CD4-positive, alpha-beta T cell (primary cell): ENCODE measurements at regions of chr2 and their contacts with region 1.

Region 1: DNA sequence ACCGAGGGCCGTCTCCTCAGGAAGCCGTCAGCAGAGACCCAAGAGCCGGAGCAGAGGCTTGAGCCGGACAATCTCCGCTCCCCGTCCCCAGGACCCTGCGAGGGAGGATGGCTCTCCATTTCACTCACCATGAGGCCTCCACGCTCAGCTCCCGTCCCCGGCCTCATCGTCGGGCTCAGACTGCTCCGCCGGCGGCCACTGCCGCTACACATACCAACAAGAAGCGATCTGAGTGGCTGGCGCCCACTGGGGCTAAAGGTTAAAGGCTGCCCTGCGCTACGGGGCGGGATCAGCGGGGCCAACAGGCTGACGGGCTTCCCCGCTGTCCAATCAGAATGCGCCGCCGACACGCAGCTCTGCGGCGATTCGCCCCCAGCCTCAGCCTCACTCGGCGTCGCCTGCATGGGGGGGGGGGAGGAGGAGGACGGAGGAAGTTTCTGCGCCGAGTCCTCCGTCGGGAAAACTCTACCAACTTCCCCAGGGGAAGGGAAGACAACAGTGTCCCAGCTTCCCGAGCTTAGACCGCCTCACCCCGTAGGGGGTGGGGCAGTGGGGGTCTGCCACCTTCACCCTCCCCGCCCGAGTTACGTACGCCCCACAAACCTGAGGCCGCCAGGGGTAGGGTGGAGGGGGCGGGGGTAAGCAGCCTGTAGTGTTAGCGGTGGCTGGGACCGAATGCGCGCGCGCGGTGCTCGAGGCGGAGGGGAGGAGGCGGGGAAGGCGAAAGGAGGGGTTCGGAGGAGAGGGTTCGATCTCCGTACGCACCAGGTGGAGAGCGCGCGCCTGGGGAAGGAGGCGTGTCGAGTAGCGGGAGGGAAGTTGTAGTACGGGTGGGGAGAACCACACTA is at the start of gene PRPF40A:
- DNase-seq: peak; percentile 97 to 100 (median 99)
- ATAC-seq: peak; percentile 76
- H3K4me3 ChIP-seq: peak within 1 kb of the TSS; percentile 88
- H3K4me3 Mint-ChIP-seq: peak within 1 kb of the TSS; percentile 99
- H3K27ac ChIP-seq: peak within 1 kb of the TSS; percentile 95 to 97
- H3K27ac Mint-ChIP-seq: peak within 1 kb of the TSS; percentile 97
- H3K4me1 ChIP-seq: peaks cover 8% of the 10 kb centered on the region
- H3K4me1 Mint-ChIP-seq: peaks cover 77% of the 10 kb centered on the region
- H3K27me3 ChIP-seq: no peaks in the 10 kb centered on the region
- H3K27me3 Mint-ChIP-seq: no peaks in the 10 kb centered on the region
- CTCF ChIP-seq: no peak
- total RNA-seq, gene PRPF40A: 146 to 148 TPM

Region 2: DNA sequence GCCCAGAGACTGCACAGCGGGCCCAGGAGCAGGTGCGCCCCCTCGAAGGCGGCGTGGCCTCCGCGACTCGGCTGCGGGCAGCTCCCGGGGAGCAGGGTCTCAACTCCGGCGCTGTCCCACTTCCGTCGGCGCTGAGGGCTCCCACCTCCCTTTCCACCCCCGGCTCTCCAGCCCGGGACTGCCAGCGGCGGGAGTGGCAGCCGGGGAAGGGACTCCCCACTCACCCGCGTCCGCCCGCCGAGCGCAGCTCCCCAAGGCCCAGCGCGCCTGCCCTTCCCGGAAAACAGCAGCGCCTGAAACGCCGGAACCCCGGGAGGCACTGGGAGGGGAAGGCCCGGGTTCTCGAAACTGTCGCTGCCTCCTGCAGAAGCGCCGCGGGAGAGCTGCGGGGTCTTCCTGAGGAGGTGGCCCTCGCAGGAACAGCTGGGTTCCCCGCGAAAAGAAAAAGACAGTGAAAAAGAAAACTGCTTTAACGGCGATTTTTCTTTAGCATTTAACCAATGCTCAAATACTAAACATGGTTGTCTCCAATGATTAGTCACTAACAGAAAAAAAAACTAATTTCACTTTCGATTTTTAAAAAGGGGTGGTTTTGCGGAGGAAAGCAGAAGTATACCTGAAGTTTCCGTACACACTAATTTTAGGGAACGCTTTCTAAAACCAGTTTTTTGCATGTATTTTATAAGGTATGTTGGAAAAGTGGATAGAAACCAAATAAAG is 1427.9 kb before region 1 on chr2 and contains the start of gene NMI:
- CTCF ChIA-PET with region 1: no interaction called
- POLR2A ChIA-PET with region 1: interaction called, 4 read pairs
- intact Hi-C with region 1: loop called in 1 of 2 experiments (anchors 10 kb)
- DNase-seq: peak; percentile 42 to 89 (median 61)
- ATAC-seq: peak; percentile 71
- H3K4me3 ChIP-seq: peak within 1 kb of the TSS; percentile 82
- H3K4me3 Mint-ChIP-seq: peak within 1 kb of the TSS; percentile 94
- H3K27ac ChIP-seq: peak within 1 kb of the TSS; percentile 82 to 97
- H3K27ac Mint-ChIP-seq: peak within 1 kb of the TSS; percentile 96
- H3K4me1 ChIP-seq: peaks cover 23% of the 10 kb centered on the region
- H3K4me1 Mint-ChIP-seq: peaks cover 56% of the 10 kb centered on the region
- H3K27me3 ChIP-seq: no peaks in the 10 kb centered on the region
- H3K27me3 Mint-ChIP-seq: no peaks in the 10 kb centered on the region
- CTCF ChIP-seq: no peak
- total RNA-seq, gene NMI: 23.5 to 24.2 TPM

Region 3: GRCh38 chr2:151828143-151828889 is 889.1 kb before region 1 on chr2 and contains the start of gene ARL5A:
- CTCF ChIA-PET with region 1: no interaction called
- POLR2A ChIA-PET with region 1: interaction called, 3 read pairs
- intact Hi-C with region 1: loop called in 1 of 2 experiments (anchors 5 kb)
- DNase-seq: peak; percentile 89 to 98 (median 95)
- ATAC-seq: peak; percentile 94
- H3K4me3 ChIP-seq: peak within 1 kb of the TSS; percentile 91
- H3K4me3 Mint-ChIP-seq: peak within 1 kb of the TSS; percentile 93
- H3K27ac ChIP-seq: peak within 1 kb of the TSS; percentile 51 to 52
- H3K27ac Mint-ChIP-seq: peak within 1 kb of the TSS; percentile 95
- H3K4me1 ChIP-seq: peaks cover 18% of the 10 kb centered on the region
- H3K4me1 Mint-ChIP-seq: peaks cover 50% of the 10 kb centered on the region
- H3K27me3 ChIP-seq: no peaks in the 10 kb centered on the region
- H3K27me3 Mint-ChIP-seq: no peaks in the 10 kb centered on the region
- CTCF ChIP-seq: no peak
- total RNA-seq, gene ARL5A: 16.9 to 20.5 TPM

Region 4: DNA sequence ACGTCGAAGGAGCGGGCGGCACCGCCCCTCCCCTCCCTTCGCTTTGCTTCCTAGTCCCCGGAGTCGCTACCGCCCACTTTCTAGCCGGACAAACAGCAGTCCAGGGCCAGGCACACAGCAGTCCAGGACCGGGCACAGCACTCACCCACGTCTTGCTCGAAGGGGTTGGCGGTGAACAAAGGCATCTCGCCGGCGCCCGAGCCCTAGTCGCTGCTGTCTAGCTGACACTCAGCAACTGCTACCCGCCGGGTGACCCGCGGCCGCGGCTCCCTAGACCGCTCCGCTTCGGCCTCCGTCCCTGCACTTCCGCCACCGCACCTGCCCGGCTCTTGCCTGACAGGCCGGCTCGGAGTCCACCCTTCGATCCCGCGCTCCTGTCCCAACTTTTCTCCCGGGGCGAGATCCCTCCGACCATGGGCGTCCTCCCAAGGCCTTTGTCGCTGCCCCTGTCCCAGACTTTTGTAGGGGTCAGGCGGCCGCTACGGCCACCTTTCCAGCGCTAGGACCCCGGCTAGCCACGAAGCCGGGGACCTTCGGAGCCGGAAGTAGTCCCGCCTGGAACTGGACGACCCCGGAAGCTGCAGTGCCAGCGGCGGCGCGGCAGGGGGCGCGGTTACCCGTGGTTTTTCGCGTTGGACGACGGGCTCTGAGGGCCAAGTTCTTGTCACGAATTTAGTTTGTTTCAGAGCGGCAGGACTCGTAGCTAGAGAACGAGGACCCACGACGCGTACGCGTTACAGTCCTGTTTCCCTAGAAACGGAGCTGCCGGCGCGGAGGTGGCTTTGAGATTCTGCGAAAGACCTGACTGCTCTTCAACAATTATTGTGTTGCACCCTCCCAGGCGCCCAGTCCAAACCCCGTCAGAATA is 541.8 kb before region 1 on chr2 and contains the start of gene STAM2:
- CTCF ChIA-PET with region 1: interaction called, 8 read pairs
- POLR2A ChIA-PET with region 1: interaction called, 25 read pairs
- intact Hi-C with region 1: loop called (anchors 1 to 2 kb)
- DNase-seq: peak; percentile 81 to 96 (median 92)
- ATAC-seq: peak; percentile 85
- H3K4me3 ChIP-seq: peak within 1 kb of the TSS; percentile 98
- H3K4me3 Mint-ChIP-seq: peak within 1 kb of the TSS; percentile 98
- H3K27ac ChIP-seq: peak within 1 kb of the TSS; percentile 94 to 97
- H3K27ac Mint-ChIP-seq: peak within 1 kb of the TSS; percentile 98
- H3K4me1 ChIP-seq: peaks cover 18% of the 10 kb centered on the region
- H3K4me1 Mint-ChIP-seq: peaks cover 48% of the 10 kb centered on the region
- H3K27me3 ChIP-seq: no peaks in the 10 kb centered on the region
- H3K27me3 Mint-ChIP-seq: no peaks in the 10 kb centered on the region
- CTCF ChIP-seq: peak; percentile 96
- total RNA-seq, gene STAM2: 4.1 to 4.9 TPM

Region 5: GRCh38 chr2:152664703-152665102 is 52.7 kb before region 1 on chr2:
- CTCF ChIA-PET with region 1: no interaction called
- POLR2A ChIA-PET with region 1: interaction called, 4 read pairs
- intact Hi-C with region 1: loop called in 1 of 2 experiments (anchors 5 kb)
- DNase-seq: no peak
- ATAC-seq: no peak
- H3K4me3 ChIP-seq: no peak overlapping the region
- H3K4me3 Mint-ChIP-seq: no peak overlapping the region
- H3K27ac ChIP-seq: no peak overlapping the region
- H3K27ac Mint-ChIP-seq: no peak overlapping the region
- H3K4me1 ChIP-seq: no peaks in the 10 kb centered on the region
- H3K4me1 Mint-ChIP-seq: no peaks in the 10 kb centered on the region
- H3K27me3 ChIP-seq: no peaks in the 10 kb centered on the region
- H3K27me3 Mint-ChIP-seq: no peaks in the 10 kb centered on the region
- CTCF ChIP-seq: no peak

Region 6: GRCh38 chr2:152694161-152694661 is 23.2 kb before region 1 on chr2:
- CTCF ChIA-PET with region 1: interaction called, 4 read pairs
- POLR2A ChIA-PET with region 1: interaction called, 14 read pairs
- intact Hi-C with region 1: loop called in 1 of 2 experiments (anchors 2 kb)
- DNase-seq: peak in 5 of 14 experiments; percentile 2 to 60 (median 44)
- ATAC-seq: peak; percentile 72
- H3K4me3 ChIP-seq: peak overlapping the region; percentile 38
- H3K4me3 Mint-ChIP-seq: peak overlapping the region; percentile 67
- H3K27ac ChIP-seq: peak overlapping the region in 1 of 2 donors; percentile 21
- H3K27ac Mint-ChIP-seq: peak overlapping the region; percentile 63
- H3K4me1 ChIP-seq: peaks cover 4% of the 10 kb centered on the region
- H3K4me1 Mint-ChIP-seq: peaks cover 60% of the 10 kb centered on the region
- H3K27me3 ChIP-seq: no peaks in the 10 kb centered on the region
- H3K27me3 Mint-ChIP-seq: no peaks in the 10 kb centered on the region
- CTCF ChIP-seq: no peak

Region 7: DNA sequence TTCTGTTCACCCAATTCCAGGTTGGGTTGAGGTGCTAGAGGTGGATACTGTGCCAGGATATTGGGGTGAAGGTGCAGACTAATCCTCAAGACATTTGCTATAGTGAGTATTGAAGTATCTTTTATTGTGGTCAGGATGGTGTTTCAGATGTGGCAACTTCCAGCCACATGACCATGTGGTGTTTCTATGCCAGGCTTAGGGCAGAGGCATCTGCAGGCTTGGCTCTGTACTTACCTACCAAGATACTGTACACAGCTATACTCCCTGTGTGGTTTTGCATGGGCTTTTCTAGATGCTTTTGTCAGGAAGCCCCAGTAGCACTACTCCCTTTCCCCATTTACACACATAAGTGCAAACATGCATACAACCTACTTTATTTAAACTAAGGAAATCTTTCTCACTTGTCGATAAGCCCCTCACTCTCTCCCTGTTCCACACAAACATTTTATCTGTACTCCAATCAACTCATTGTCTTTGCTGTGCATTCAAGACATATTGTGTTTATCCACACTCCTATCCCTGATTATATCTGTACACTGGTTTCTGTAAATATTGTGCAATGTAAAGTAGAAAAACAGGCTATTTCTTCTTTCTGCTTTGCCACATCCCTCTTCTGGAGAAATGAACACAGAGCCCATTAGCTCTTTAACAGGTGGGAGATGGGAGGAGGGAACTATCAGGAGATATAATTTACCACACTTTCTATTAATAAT is 13.3 kb after region 1 on chr2:
- CTCF ChIA-PET with region 1: interaction called, 8 read pairs
- POLR2A ChIA-PET with region 1: interaction called, 18 read pairs
- intact Hi-C with region 1: no loop called
- DNase-seq: peak in 12 of 14 experiments; percentile 15 to 84 (median 28)
- ATAC-seq: peak; percentile 87
- H3K4me3 ChIP-seq: no peak overlapping the region
- H3K4me3 Mint-ChIP-seq: no peak overlapping the region
- H3K27ac ChIP-seq: no peak overlapping the region
- H3K27ac Mint-ChIP-seq: peak overlapping the region; percentile 2
- H3K4me1 ChIP-seq: peaks cover 10% of the 10 kb centered on the region
- H3K4me1 Mint-ChIP-seq: peaks cover 45% of the 10 kb centered on the region
- H3K27me3 ChIP-seq: no peaks in the 10 kb centered on the region
- H3K27me3 Mint-ChIP-seq: no peaks in the 10 kb centered on the region
- CTCF ChIP-seq: no peak

Region 8: DNA sequence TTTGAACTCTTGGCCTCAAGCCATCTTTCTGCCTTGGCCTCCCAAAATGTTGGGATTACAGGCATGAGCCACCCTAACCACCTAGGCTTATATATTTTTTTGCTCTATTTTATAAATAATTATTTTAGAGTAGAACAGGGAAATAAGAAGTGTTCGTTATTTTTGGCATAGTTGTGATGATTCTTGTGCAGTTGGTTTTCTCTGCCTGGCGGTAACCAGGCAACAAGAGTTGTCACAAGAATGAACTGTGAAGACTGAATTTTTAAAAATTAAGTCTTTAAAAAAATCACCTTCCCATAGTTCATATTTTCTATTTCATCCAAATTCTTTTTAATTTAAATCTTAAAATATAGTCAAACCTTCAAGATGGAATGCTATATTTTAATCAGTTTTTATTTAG is 311.2 kb after region 1 on chr2:
- CTCF ChIA-PET with region 1: no interaction called
- POLR2A ChIA-PET with region 1: no interaction called
- intact Hi-C with region 1: no loop called
- DNase-seq: no peak
- ATAC-seq: no peak
- H3K4me3 ChIP-seq: no peak overlapping the region
- H3K4me3 Mint-ChIP-seq: no peak overlapping the region
- H3K27ac ChIP-seq: no peak overlapping the region
- H3K27ac Mint-ChIP-seq: no peak overlapping the region
- H3K4me1 ChIP-seq: no peaks in the 10 kb centered on the region
- H3K4me1 Mint-ChIP-seq: no peaks in the 10 kb centered on the region
- H3K27me3 ChIP-seq: no peaks in the 10 kb centered on the region
- H3K27me3 Mint-ChIP-seq: no peaks in the 10 kb centered on the region
- CTCF ChIP-seq: no peak